Left colon (tissue), 2 donors: ENCODE measurements at regions of chr2 and their contacts with region 1.

Region 1: DNA sequence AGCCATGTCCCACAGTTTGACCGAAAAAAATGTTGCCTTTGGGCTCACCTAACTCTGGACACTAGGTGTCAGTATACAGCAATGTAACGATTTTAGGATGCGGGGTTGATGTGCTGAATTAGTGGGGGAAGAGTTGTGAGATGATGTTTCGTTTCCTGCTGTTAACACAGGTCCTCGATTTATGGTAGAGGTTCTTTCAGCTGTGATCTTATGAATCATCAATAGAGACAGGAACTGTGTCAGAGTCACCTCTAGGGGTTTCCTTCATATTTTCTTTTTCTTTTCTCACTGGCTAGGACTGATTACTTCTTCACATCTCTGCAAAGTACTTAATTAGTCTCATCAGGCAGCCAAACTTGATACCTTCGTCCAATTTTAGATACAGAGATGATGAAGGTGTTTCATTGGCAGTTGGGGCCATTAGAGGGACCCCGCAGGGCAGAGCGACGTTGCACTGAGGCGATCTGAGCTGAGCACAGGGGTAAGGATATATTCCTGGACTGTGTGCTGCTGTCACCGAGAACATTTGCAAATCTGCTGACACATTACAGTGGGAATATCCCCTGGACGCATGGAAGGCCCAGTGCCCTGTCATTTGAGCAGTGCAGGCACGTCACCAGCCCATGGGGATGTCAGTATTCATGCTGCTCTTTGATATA is 10.2 kb upstream of the MMADHC start:
- DNase-seq: no peak
- ATAC-seq: peak; percentile 88

Region 2: DNA sequence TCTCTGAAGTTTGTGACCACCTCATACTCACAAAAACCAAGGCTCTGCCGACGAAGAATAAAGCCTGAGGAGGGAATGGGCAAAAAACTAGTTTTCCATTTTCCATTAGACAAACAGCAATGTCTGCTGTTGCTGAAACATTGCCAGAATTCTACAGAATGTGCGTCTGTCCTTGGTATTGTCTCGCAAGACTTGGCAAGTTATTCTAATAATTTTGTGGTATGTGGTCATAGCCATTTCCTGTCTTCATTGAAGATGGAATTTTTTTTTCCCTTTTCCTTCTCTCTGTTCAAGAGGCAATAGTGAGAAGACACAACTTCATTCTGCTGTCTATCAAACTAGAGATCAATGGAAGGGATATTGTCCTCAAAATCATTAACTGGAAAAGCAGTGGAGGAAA is 593.6 kb after region 1 on chr2:
- intact Hi-C with region 1: no loop called
- DNase-seq: no peak
- ATAC-seq: no peak

Region 3: GRCh38 chr2:150491943-150492342 is 894.1 kb after region 1 on chr2:
- intact Hi-C with region 1: loop called in 1 of 2 experiments (anchors 5 kb)
- DNase-seq: no peak
- ATAC-seq: no peak

Region 4: DNA sequence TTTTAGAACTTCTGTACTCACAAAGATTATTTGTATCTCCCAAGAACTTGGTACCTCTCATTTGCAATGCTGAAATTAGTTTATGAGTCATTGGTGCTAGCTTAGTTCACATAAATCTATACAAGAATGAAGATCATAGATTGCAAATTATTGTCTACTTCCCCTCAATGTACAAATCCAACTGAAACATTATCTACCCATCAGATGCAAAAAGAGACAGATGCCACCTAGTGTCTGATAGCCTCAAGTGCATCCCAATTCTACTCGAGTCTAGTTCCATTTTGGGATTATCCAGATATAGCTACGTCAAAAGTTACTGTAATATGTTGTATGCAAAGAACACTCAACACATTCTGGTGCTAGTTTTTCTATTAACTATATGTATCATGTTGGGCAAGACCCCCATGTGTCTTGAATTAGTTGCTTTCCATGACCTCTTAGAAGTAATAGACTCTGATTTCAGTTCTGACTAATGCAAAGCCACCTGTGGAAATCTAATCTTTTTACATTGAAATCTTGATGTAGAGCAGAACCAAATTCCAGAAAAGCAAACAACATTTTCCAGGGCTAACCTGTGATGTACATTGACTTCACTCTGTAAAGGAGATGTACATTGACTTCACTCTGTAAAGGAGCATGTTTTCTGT is 1453.9 kb after region 1 on chr2:
- intact Hi-C with region 1: loop called in 1 of 2 experiments (anchors 5 kb)
- DNase-seq: peak in 1 of 2 donors; percentile 8
- ATAC-seq: no peak

Region 5: GRCh38 chr2:151238527-151239487 is 1641.0 kb after region 1 on chr2:
- intact Hi-C with region 1: loop called in 1 of 2 experiments (anchors 5 kb)
- DNase-seq: no peak
- ATAC-seq: peak; percentile 41